H1 (cell line): ENCODE measurements at regions of chr9 and their contacts with region 1.

Region 1: GRCh38 chr9:32526041-32526706 is at the start of gene RIGI:
- DNase-seq: peak; percentile 47 to 80
- H3K4me3 ChIP-seq: peak within 1 kb of the TSS; percentile 67 to 90 (median 82)
- H3K27ac ChIP-seq: peak within 1 kb of the TSS; percentile 53
- H3K4me1 ChIP-seq: peaks cover 0 to 5% (median 2%) of the 10 kb centered on the region in 4 experiments; a peak in 3 of 7 replicates
- H3K27me3 ChIP-seq: no peaks in the 10 kb centered on the region
- CTCF ChIP-seq: peak in 2 of 3 experiments; percentile 36 to 59; a peak in 2 of 4 replicates
- EP300 ChIP-seq: no peak
- POLR2A ChIP-seq: peak in 1 of 2 experiments; percentile 74; a peak in 1 of 3 replicates
- RAD21 ChIP-seq: peak; percentile 45 to 59
- total RNA-seq, gene RIGI: 6.6 and 6.7 TPM in 2 replicates

Region 2: GRCh38 chr9:32384364-32385151 is 141.6 kb before region 1 on chr9 and contains the start of gene ACO1:
- CTCF ChIA-PET with region 1: interaction called, 59 read pairs
- POLR2A ChIA-PET with region 1: interaction called, 3 read pairs
- DNase-seq: peak; percentile 64 to 93
- H3K4me3 ChIP-seq: peak within 1 kb of the TSS; percentile 78 to 98 (median 89)
- H3K27ac ChIP-seq: no peak within 1 kb of the TSS
- H3K4me1 ChIP-seq: peaks cover 0 to 4% (median 3%) of the 10 kb centered on the region in 4 experiments; a peak in 3 of 7 replicates
- H3K27me3 ChIP-seq: peaks cover 2 to 15% (median 8%) of the 10 kb centered on the region in 4 experiments
- CTCF ChIP-seq: peak in 1 of 3 experiments; percentile 8; a peak in 1 of 4 replicates
- EP300 ChIP-seq: no peak
- POLR2A ChIP-seq: peak in 1 of 2 experiments; percentile 56; a peak in 2 of 3 replicates
- RAD21 ChIP-seq: no peak
- total RNA-seq, gene ACO1: 45.4 and 49.8 TPM in 2 replicates

Region 3: GRCh38 chr9:32431940-32432555 is 94.1 kb before region 1 on chr9:
- CTCF ChIA-PET with region 1: interaction called, 11 read pairs
- POLR2A ChIA-PET with region 1: no interaction called
- DNase-seq: peak in 1 of 2 experiments; percentile 52
- H3K4me3 ChIP-seq: no peak overlapping the region
- H3K27ac ChIP-seq: no peak overlapping the region
- H3K4me1 ChIP-seq: no peaks in the 10 kb centered on the region
- H3K27me3 ChIP-seq: peaks cover 0 to 1% (median 0%) of the 10 kb centered on the region in 4 experiments; a peak in 1 of 7 replicates
- CTCF ChIP-seq: peak; percentile 39 to 62 (median 52)
- EP300 ChIP-seq: no peak
- POLR2A ChIP-seq: no peak
- RAD21 ChIP-seq: peak; percentile 47 to 49

Region 4: DNA sequence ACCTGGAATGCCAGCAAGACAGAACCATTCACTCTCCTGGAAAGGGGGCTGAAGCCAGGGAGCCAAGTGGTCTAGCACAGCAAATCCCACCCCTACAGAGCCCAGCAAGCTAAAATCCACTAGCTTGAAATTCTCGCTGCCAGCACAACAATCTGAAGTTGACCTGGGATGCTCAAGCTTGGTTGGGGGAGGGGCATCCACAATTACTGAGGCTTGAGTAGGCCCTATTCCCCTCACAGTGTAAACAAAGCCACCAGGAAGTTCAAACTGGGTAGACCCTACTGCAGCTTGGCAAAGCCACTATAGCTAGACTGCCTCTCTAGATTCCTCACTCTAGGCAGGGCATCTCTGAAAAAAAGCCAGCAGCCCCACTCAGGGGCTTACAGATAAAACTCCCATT is 17.4 kb before region 1 on chr9:
- CTCF ChIA-PET with region 1: interaction called, 20 read pairs
- POLR2A ChIA-PET with region 1: no interaction called
- DNase-seq: peak in 1 of 2 experiments; percentile 48
- H3K4me3 ChIP-seq: no peak overlapping the region
- H3K27ac ChIP-seq: no peak overlapping the region
- H3K4me1 ChIP-seq: peaks cover 0 to 10% (median 4%) of the 10 kb centered on the region in 4 experiments; a peak in 5 of 7 replicates
- H3K27me3 ChIP-seq: no peaks in the 10 kb centered on the region
- CTCF ChIP-seq: no peak
- EP300 ChIP-seq: no peak
- POLR2A ChIP-seq: no peak
- RAD21 ChIP-seq: no peak

Region 5: GRCh38 chr9:32543047-32543446 is 16.9 kb after region 1 on chr9:
- CTCF ChIA-PET with region 1: interaction called, 18 read pairs
- POLR2A ChIA-PET with region 1: interaction called, 11 read pairs
- DNase-seq: no peak
- H3K4me3 ChIP-seq: no peak overlapping the region
- H3K27ac ChIP-seq: no peak overlapping the region
- H3K4me1 ChIP-seq: no peaks in the 10 kb centered on the region
- H3K27me3 ChIP-seq: no peaks in the 10 kb centered on the region
- CTCF ChIP-seq: no peak
- EP300 ChIP-seq: no peak
- POLR2A ChIP-seq: no peak
- RAD21 ChIP-seq: no peak

Region 6: DNA sequence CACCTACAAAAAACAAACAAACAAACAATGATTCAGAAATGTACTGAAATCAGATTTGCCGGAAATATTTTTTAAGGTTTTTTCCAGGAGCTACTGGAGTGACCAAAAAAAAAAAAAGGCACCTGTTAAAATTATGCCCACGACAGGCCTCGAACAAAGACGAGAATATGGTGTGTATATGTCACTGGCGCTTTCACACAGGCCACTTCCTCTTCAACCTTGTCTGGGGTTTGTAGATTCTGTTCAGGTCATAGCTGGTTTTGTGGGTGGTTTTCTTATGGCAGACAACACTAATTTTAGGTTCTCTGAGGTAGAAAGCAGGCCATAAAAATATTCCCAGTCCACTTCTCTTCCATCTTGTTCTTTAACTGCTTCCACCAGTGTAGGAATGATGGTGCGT is 39.8 kb after region 1 on chr9:
- CTCF ChIA-PET with region 1: no interaction called
- POLR2A ChIA-PET with region 1: no interaction called
- DNase-seq: no peak
- H3K4me3 ChIP-seq: no peak overlapping the region
- H3K27ac ChIP-seq: no peak overlapping the region
- H3K4me1 ChIP-seq: no peaks in the 10 kb centered on the region
- H3K27me3 ChIP-seq: no peaks in the 10 kb centered on the region
- CTCF ChIP-seq: no peak
- EP300 ChIP-seq: no peak
- POLR2A ChIP-seq: no peak
- RAD21 ChIP-seq: no peak